Activated CD8-positive, alpha-beta T cell treated with anti-CD3 and anti-CD28 coated beads, Interleukin-2, amount 10 ng/mL, durations not matched to agents 7 days and 5 days (primary cell): ENCODE measurements at regions of chr11 and their contacts with region 1.

Region 1: GRCh38 chr11:45846974-45847910 is at the start of gene CRY2:
- DNase-seq: peak; percentile 98
- ATAC-seq: peak; percentile 87
- H3K4me3 Mint-ChIP-seq: peak within 1 kb of the TSS; percentile 77
- H3K27ac Mint-ChIP-seq: peak within 1 kb of the TSS; percentile 86
- H3K4me1 Mint-ChIP-seq: peaks cover 49% of the 10 kb centered on the region
- H3K27me3 Mint-ChIP-seq: peaks cover 15% of the 10 kb centered on the region
- total RNA-seq, gene CRY2: 24.4 to 28.1 TPM

Region 2: DNA sequence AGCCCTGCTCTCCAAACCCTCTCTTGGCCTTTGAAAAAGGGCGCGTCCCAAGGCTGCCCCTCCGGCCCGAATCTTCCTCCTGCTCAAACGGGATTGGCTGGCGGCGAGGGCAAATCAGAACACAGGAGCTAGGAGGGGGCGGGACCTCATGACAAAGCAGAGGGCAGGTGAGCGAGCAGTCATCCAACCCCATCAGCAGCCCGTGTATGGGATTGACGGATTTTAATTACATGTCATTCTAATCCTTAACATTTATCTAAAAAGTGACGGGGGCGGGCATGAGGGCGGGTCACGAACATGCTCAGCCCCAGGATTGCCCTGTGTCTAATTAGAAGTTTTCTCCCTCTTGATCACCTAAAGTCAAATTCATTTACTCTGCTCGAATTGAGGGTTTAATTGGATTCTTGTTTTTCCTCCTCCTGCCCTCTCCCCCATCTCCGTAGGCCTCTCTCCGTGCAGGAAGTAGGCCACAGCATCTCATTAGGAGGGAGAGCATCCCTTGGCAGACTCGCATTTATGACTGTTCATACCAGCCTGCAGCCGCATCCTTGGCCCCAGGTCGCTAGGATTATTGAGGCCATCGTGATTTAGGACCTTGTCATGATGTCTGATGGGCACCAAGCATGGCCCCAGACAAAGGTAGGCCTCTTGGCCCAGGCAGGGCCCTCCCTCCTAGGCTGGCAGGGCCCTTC is 329.0 kb before region 1 on chr11:
- CTCF ChIA-PET with region 1: no interaction called
- POLR2A ChIA-PET with region 1: no interaction called
- DNase-seq: no peak
- ATAC-seq: no peak
- H3K4me3 Mint-ChIP-seq: no peak overlapping the region
- H3K27ac Mint-ChIP-seq: no peak overlapping the region
- H3K4me1 Mint-ChIP-seq: no peaks in the 10 kb centered on the region
- H3K27me3 Mint-ChIP-seq: no peaks in the 10 kb centered on the region

Region 3: GRCh38 chr11:45834298-45834756 is 12.9 kb before region 1 on chr11:
- CTCF ChIA-PET with region 1: interaction called, 71 read pairs
- POLR2A ChIA-PET with region 1: interaction called, 10 read pairs
- DNase-seq: peak; percentile 78
- ATAC-seq: peak; percentile 96
- H3K4me3 Mint-ChIP-seq: peak overlapping the region; percentile 74
- H3K27ac Mint-ChIP-seq: peak overlapping the region; percentile 98
- H3K4me1 Mint-ChIP-seq: peaks cover 53% of the 10 kb centered on the region
- H3K27me3 Mint-ChIP-seq: peaks cover 18% of the 10 kb centered on the region

Region 4: GRCh38 chr11:45879803-45880686 is 32.8 kb after region 1 on chr11:
- CTCF ChIA-PET with region 1: no interaction called
- POLR2A ChIA-PET with region 1: no interaction called
- DNase-seq: no peak
- ATAC-seq: no peak
- H3K4me3 Mint-ChIP-seq: no peak overlapping the region
- H3K27ac Mint-ChIP-seq: no peak overlapping the region
- H3K4me1 Mint-ChIP-seq: peaks cover under 1% of the 10 kb centered on the region
- H3K27me3 Mint-ChIP-seq: no peaks in the 10 kb centered on the region

Region 5: GRCh38 chr11:45949992-45950407 is 102.8 kb after region 1 on chr11:
- CTCF ChIA-PET with region 1: no interaction called
- POLR2A ChIA-PET with region 1: no interaction called
- DNase-seq: no peak
- ATAC-seq: no peak
- H3K4me3 Mint-ChIP-seq: no peak overlapping the region
- H3K27ac Mint-ChIP-seq: no peak overlapping the region
- H3K4me1 Mint-ChIP-seq: no peaks in the 10 kb centered on the region
- H3K27me3 Mint-ChIP-seq: no peaks in the 10 kb centered on the region